ENCODE measurements at regions of chr17 and their contacts with region 1.

Region 1: DNA sequence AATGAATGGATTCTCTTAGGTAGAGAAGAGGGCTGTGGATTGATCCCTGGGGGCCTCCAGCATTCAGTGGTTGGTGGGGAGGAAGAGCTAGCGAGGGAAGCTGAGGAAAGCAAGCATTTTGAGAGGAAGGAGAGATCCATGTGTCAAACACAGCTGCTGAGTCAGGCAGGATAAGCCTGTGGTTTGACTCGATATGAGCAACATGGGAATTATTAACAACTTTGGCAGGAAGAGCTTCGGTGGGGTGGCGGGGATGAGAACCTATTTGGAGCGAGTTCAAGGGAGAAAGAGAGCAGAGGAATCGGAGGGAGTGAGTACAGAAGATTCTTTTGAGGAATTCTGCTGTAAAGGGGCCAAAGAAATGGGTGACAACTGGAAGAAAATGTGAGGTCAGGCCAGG is 59.5 kb upstream of the CDC42EP4 start:
- DNase-seq: no peak
- ATAC-seq: no peak
- H3K4me3 ChIP-seq: no peak overlapping the region
- H3K4me3 Mint-ChIP-seq: no peak overlapping the region
- H3K27ac ChIP-seq: no peak overlapping the region
- H3K27ac Mint-ChIP-seq: no peak overlapping the region
- H3K4me1 ChIP-seq: no peaks in the 10 kb centered on the region
- H3K4me1 Mint-ChIP-seq: no peaks in the 10 kb centered on the region
- H3K27me3 ChIP-seq: no peaks in the 10 kb centered on the region
- H3K27me3 Mint-ChIP-seq: no peaks in the 10 kb centered on the region
- CTCF ChIP-seq: no peak

Region 2: DNA sequence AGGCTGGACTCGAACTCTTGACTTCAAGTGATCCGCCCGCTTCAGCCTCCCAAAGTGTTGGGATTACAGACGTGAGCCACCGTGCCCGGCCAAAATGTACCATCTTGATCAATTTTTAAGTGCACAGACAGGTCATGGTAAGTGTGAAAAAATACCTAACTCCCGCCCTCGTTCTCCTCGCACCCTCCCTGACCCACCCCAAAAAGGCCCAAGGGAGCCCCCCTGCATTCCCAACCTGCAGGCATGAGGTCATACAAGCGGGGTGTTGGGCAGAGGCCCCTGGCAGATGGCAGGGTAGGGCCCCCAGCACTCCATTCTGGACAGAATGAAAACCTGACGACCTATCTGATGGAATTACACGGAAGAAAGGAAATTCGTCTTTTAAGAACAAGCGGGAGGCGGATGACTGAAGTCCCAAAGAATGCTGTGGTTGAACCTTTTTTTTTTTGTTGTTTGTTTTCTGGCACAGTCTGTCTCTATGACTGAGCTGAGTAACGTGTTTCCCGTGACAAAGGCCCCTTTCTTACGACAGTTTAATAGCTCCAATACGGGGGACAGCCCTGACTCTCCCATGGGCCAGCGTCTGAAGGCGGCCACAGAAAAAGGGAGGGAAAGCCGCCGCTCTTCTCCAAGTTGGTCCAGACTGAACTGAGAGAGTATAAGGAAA is 655.2 kb before region 1 on chr17:
- CTCF ChIA-PET with region 1: interaction called, 14 read pairs
- POLR2A ChIA-PET with region 1: no interaction called
- intact Hi-C with region 1: no loop called
- DNase-seq: no peak
- ATAC-seq: no peak
- H3K4me3 ChIP-seq: no peak overlapping the region
- H3K4me3 Mint-ChIP-seq: no peak overlapping the region
- H3K27ac ChIP-seq: no peak overlapping the region
- H3K27ac Mint-ChIP-seq: no peak overlapping the region
- H3K4me1 ChIP-seq: peaks cover 20% of the 10 kb centered on the region
- H3K4me1 Mint-ChIP-seq: peaks cover 23% of the 10 kb centered on the region
- H3K27me3 ChIP-seq: no peaks in the 10 kb centered on the region
- H3K27me3 Mint-ChIP-seq: no peaks in the 10 kb centered on the region
- CTCF ChIP-seq: no peak

Region 3: GRCh38 chr17:72985881-72986720 is 385.2 kb before region 1 on chr17:
- CTCF ChIA-PET with region 1: interaction called, 7 read pairs
- POLR2A ChIA-PET with region 1: no interaction called
- intact Hi-C with region 1: loop called in 1 of 2 experiments (anchors 5 kb)
- DNase-seq: peak; percentile 17 to 63 (median 39)
- ATAC-seq: no peak
- H3K4me3 ChIP-seq: no peak overlapping the region
- H3K4me3 Mint-ChIP-seq: no peak overlapping the region
- H3K27ac ChIP-seq: no peak overlapping the region
- H3K27ac Mint-ChIP-seq: no peak overlapping the region
- H3K4me1 ChIP-seq: no peaks in the 10 kb centered on the region
- H3K4me1 Mint-ChIP-seq: peaks cover 2% of the 10 kb centered on the region
- H3K27me3 ChIP-seq: no peaks in the 10 kb centered on the region
- H3K27me3 Mint-ChIP-seq: no peaks in the 10 kb centered on the region
- CTCF ChIP-seq: peak; percentile 66

Region 4: DNA sequence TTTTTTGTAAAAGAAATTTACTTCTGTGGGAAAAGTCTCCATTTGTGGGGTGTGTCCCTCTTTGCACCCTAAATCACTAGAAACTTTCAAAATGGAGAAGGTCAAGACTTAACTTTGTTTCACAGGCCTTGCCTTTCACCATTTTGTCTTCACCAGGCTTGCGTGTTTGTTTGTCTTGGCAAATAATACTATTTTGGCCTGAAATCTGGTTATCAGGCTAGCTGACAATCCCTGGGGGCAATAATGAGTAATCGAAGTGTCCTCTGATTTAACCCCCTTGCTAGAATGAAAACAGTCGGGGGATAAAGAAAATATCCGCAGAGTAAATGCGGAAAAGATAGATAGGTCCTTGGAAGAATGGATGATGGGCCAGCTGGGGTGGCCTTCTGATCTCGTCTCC is 313.3 kb before region 1 on chr17:
- CTCF ChIA-PET with region 1: no interaction called
- POLR2A ChIA-PET with region 1: no interaction called
- intact Hi-C with region 1: no loop called
- DNase-seq: no peak
- ATAC-seq: no peak
- H3K4me3 ChIP-seq: no peak overlapping the region
- H3K4me3 Mint-ChIP-seq: no peak overlapping the region
- H3K27ac ChIP-seq: no peak overlapping the region
- H3K27ac Mint-ChIP-seq: no peak overlapping the region
- H3K4me1 ChIP-seq: no peaks in the 10 kb centered on the region
- H3K4me1 Mint-ChIP-seq: no peaks in the 10 kb centered on the region
- H3K27me3 ChIP-seq: no peaks in the 10 kb centered on the region
- H3K27me3 Mint-ChIP-seq: no peaks in the 10 kb centered on the region
- CTCF ChIP-seq: no peak

Region 5: GRCh38 chr17:73247726-73248125 is 123.6 kb before region 1 on chr17:
- CTCF ChIA-PET with region 1: interaction called, 110 read pairs
- POLR2A ChIA-PET with region 1: no interaction called
- intact Hi-C with region 1: no loop called
- DNase-seq: no peak
- ATAC-seq: no peak
- H3K4me3 ChIP-seq: no peak overlapping the region
- H3K4me3 Mint-ChIP-seq: no peak overlapping the region
- H3K27ac ChIP-seq: no peak overlapping the region
- H3K27ac Mint-ChIP-seq: no peak overlapping the region
- H3K4me1 ChIP-seq: no peaks in the 10 kb centered on the region
- H3K4me1 Mint-ChIP-seq: no peaks in the 10 kb centered on the region
- H3K27me3 ChIP-seq: no peaks in the 10 kb centered on the region
- H3K27me3 Mint-ChIP-seq: no peaks in the 10 kb centered on the region
- CTCF ChIP-seq: no peak

Region 6: GRCh38 chr17:73261617-73261951 is 109.7 kb before region 1 on chr17 and contains the start of gene CPSF4L:
- CTCF ChIA-PET with region 1: interaction called, 110 read pairs
- POLR2A ChIA-PET with region 1: no interaction called
- intact Hi-C with region 1: no loop called
- DNase-seq: no peak
- ATAC-seq: no peak
- H3K4me3 ChIP-seq: no peak within 1 kb of the TSS
- H3K4me3 Mint-ChIP-seq: no peak within 1 kb of the TSS
- H3K27ac ChIP-seq: no peak within 1 kb of the TSS
- H3K27ac Mint-ChIP-seq: no peak within 1 kb of the TSS
- H3K4me1 ChIP-seq: no peaks in the 10 kb centered on the region
- H3K4me1 Mint-ChIP-seq: no peaks in the 10 kb centered on the region
- H3K27me3 ChIP-seq: no peaks in the 10 kb centered on the region
- H3K27me3 Mint-ChIP-seq: no peaks in the 10 kb centered on the region
- CTCF ChIP-seq: no peak
- total RNA-seq, gene CPSF4L: not detected

Region 7: GRCh38 chr17:73342050-73342522 is 29.2 kb before region 1 on chr17:
- CTCF ChIA-PET with region 1: interaction called, 11 read pairs
- POLR2A ChIA-PET with region 1: no interaction called
- intact Hi-C with region 1: no loop called
- DNase-seq: no peak
- ATAC-seq: no peak
- H3K4me3 ChIP-seq: no peak overlapping the region
- H3K4me3 Mint-ChIP-seq: no peak overlapping the region
- H3K27ac ChIP-seq: no peak overlapping the region
- H3K27ac Mint-ChIP-seq: no peak overlapping the region
- H3K4me1 ChIP-seq: no peaks in the 10 kb centered on the region
- H3K4me1 Mint-ChIP-seq: no peaks in the 10 kb centered on the region
- H3K27me3 ChIP-seq: no peaks in the 10 kb centered on the region
- H3K27me3 Mint-ChIP-seq: no peaks in the 10 kb centered on the region
- CTCF ChIP-seq: no peak

Region 8: DNA sequence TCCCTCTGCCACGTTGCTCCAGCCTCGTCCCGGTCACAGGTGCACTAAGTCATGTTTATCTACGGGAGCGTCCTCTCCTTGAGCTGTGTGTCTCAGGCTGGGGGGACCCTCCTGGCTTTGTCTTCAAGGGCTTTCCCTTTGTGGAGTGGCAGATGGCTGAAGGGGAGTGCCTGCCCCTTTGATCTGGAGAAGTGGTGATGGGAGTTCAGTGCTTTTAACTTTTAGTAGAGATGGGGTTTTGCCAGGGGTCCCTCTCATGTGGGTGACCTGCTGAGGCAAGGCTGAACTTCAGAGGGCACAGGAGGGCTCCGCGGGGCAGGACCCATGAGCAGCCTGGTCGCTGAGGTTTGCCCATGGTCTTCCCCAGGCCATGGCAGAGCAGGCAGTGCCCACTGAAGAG is 13.6 kb after region 1 on chr17:
- CTCF ChIA-PET with region 1: interaction called, 13 read pairs
- POLR2A ChIA-PET with region 1: no interaction called
- intact Hi-C with region 1: no loop called
- DNase-seq: no peak
- ATAC-seq: no peak
- H3K4me3 ChIP-seq: no peak overlapping the region
- H3K4me3 Mint-ChIP-seq: no peak overlapping the region
- H3K27ac ChIP-seq: no peak overlapping the region
- H3K27ac Mint-ChIP-seq: no peak overlapping the region
- H3K4me1 ChIP-seq: no peaks in the 10 kb centered on the region
- H3K4me1 Mint-ChIP-seq: no peaks in the 10 kb centered on the region
- H3K27me3 ChIP-seq: no peaks in the 10 kb centered on the region
- H3K27me3 Mint-ChIP-seq: no peaks in the 10 kb centered on the region
- CTCF ChIP-seq: no peak

Region 9: GRCh38 chr17:73533781-73534180 is 162.5 kb after region 1 on chr17:
- CTCF ChIA-PET with region 1: no interaction called
- POLR2A ChIA-PET with region 1: no interaction called
- intact Hi-C with region 1: no loop called
- DNase-seq: no peak
- ATAC-seq: no peak
- H3K4me3 ChIP-seq: no peak overlapping the region
- H3K4me3 Mint-ChIP-seq: no peak overlapping the region
- H3K27ac ChIP-seq: no peak overlapping the region
- H3K27ac Mint-ChIP-seq: no peak overlapping the region
- H3K4me1 ChIP-seq: peaks cover 4% of the 10 kb centered on the region
- H3K4me1 Mint-ChIP-seq: peaks cover 17% of the 10 kb centered on the region
- H3K27me3 ChIP-seq: no peaks in the 10 kb centered on the region
- H3K27me3 Mint-ChIP-seq: no peaks in the 10 kb centered on the region
- CTCF ChIP-seq: no peak

Region 10: DNA sequence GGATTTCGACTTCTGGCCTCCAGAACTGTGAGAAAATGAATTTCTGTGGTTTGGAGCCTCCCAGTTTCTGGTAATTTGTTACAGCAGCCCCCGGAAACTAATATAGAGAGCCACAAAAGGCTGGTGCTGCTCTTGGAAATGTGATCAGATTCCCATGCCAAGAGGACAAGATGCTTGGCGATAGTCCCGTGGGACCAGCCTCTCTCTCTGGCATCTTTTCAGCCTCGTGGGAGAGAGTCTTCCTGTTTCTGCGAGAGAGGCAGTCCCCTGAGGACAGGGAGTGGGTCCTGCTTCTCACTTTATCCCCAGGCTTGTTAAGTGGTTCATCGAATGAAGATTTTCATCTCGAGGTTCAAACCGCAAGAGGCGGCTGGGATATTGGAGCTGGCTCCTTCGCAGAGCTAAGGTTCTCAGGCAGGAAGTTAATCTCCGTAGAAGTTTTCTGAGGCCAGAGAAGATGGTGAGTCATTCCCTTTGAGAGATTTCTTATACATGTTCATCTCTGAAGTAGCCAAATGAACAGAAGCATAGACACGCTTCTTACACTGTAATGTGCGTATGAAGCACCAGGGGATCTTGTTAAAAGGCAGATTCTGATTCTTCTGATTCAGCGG is 484.5 kb after region 1 on chr17:
- CTCF ChIA-PET with region 1: no interaction called
- POLR2A ChIA-PET with region 1: no interaction called
- intact Hi-C with region 1: no loop called
- DNase-seq: no peak
- ATAC-seq: no peak
- H3K4me3 ChIP-seq: no peak overlapping the region
- H3K4me3 Mint-ChIP-seq: no peak overlapping the region
- H3K27ac ChIP-seq: no peak overlapping the region
- H3K27ac Mint-ChIP-seq: no peak overlapping the region
- H3K4me1 ChIP-seq: no peaks in the 10 kb centered on the region
- H3K4me1 Mint-ChIP-seq: peaks cover 7% of the 10 kb centered on the region
- H3K27me3 ChIP-seq: no peaks in the 10 kb centered on the region
- H3K27me3 Mint-ChIP-seq: no peaks in the 10 kb centered on the region
- CTCF ChIP-seq: no peak

Measured in CD8-positive, alpha-beta T cell (primary cell).